ENCODE measurements at regions of chr1 and their contacts with region 1.

Region 1: GRCh38 chr1:110630839-110631663 is 24.9 kb upstream of the KCNA2 start:
- DNase-seq: peak; percentile 65 to 82
- ATAC-seq: peak; percentile 94

Region 2: DNA sequence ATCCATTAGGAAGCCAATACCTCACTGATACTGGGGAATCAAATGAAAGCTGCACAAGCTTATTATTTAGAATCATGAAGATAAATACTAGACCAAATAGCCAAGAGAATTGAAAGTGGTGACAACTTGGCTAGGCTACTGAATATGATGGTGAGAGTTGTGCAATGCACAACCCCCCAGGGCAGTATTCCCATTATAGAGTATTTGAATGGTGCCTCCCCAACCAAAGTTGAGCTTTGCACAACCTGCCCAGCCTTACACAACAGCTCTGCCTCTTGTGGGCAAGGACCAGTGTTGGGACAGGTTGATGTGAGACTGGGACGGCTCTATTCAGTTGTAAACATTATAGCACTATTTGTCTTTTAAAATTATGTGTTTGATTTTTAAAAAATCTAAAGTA is 134.6 kb after region 1 on chr1:
- intact Hi-C with region 1: loop called in 1 of 2 experiments (anchors 2 kb)
- DNase-seq: no peak
- ATAC-seq: no peak

Region 3: GRCh38 chr1:110780600-110781484 is 149.8 kb after region 1 on chr1:
- intact Hi-C with region 1: loop called in 1 of 2 experiments (anchors 5 kb)
- DNase-seq: peak in 1 of 2 donors; percentile 56
- ATAC-seq: peak; percentile 45

Region 4: GRCh38 chr1:110840718-110841117 is 209.7 kb after region 1 on chr1:
- intact Hi-C with region 1: no loop called
- DNase-seq: no peak
- ATAC-seq: no peak